Activated B cell treated with CpG ODN at 0.5 μM for 24 hours (primary cell): ENCODE measurements at regions of chr9 and their contacts with region 1.

Region 1: GRCh38 chr9:33202552-33203201 is 35.5 kb upstream of the B4GALT1 start:
- DNase-seq: peak; percentile 67
- ATAC-seq: peak; percentile 98
- H3K4me3 Mint-ChIP-seq: peak overlapping the region; percentile 78
- H3K27ac Mint-ChIP-seq: peak overlapping the region; percentile 83
- H3K4me1 Mint-ChIP-seq: peaks cover 24% of the 10 kb centered on the region
- H3K27me3 Mint-ChIP-seq: peaks cover 1% of the 10 kb centered on the region
- CTCF ChIP-seq: no peak

Region 2: DNA sequence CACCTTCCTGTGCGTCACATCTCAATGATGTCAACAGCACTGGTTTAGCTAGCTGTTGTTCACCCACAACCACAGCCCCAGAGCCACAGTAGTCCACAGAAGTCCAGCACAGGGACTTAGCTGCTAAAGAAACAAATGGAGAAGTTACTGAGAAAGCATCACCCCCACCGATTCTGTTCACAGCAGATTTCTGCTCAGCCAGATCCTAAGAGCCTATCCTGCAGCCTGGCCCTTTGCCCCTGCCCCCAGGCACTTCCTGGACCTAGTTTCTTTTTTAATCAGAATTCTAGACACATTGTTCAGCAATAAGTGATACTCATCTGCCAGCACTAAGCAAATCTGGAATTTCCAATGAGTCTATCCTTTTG is 42.9 kb before region 1 on chr9:
- CTCF ChIA-PET with region 1: no interaction called
- POLR2A ChIA-PET with region 1: interaction called, 11 read pairs
- intact Hi-C with region 1: no loop called
- DNase-seq: no peak
- ATAC-seq: peak; percentile 47
- H3K4me3 Mint-ChIP-seq: peak overlapping the region; percentile 97
- H3K27ac Mint-ChIP-seq: peak overlapping the region; percentile 95
- H3K4me1 Mint-ChIP-seq: peaks cover 99% of the 10 kb centered on the region
- H3K27me3 Mint-ChIP-seq: no peaks in the 10 kb centered on the region
- CTCF ChIP-seq: no peak

Region 3: DNA sequence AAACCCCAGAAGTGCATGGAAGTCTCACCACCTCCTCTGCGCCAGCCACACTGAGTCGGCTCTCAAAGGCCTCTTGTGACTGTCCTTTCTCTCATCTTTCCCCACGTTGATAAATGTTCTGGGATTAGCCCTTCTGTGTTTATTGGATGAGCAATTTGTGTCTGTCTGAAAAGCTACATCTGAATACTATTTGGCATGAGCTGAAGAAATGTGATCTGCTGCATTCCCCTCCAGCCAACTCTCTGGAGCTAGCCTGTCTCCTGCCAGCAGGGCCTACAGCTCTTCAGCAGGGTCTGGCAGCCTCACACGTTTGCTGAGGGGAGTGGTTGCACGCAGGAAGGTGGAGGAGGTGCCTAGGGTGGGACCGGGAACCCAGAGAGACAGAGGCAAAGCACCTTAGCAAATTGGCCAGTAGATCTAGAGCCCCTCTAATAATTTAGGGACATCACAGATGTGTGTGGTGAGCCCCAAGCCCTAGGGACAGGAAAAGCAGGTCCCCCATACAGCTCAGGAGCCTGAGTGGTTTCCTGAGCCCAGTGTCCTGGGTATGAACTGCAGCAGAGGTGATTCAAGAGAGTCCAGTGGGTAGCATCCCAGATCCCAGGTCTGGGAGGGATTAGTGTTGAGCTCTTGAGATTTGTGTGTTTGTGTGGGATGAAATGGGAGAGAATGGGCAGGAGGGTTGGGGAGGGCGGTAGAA is 15.0 kb before region 1 on chr9:
- CTCF ChIA-PET with region 1: interaction called, 4 read pairs
- POLR2A ChIA-PET with region 1: no interaction called
- intact Hi-C with region 1: loop called (anchors 2 kb)
- DNase-seq: no peak
- ATAC-seq: no peak
- H3K4me3 Mint-ChIP-seq: no peak overlapping the region
- H3K27ac Mint-ChIP-seq: no peak overlapping the region
- H3K4me1 Mint-ChIP-seq: peaks cover 10% of the 10 kb centered on the region
- H3K27me3 Mint-ChIP-seq: peaks cover 3% of the 10 kb centered on the region
- CTCF ChIP-seq: no peak

Region 4: DNA sequence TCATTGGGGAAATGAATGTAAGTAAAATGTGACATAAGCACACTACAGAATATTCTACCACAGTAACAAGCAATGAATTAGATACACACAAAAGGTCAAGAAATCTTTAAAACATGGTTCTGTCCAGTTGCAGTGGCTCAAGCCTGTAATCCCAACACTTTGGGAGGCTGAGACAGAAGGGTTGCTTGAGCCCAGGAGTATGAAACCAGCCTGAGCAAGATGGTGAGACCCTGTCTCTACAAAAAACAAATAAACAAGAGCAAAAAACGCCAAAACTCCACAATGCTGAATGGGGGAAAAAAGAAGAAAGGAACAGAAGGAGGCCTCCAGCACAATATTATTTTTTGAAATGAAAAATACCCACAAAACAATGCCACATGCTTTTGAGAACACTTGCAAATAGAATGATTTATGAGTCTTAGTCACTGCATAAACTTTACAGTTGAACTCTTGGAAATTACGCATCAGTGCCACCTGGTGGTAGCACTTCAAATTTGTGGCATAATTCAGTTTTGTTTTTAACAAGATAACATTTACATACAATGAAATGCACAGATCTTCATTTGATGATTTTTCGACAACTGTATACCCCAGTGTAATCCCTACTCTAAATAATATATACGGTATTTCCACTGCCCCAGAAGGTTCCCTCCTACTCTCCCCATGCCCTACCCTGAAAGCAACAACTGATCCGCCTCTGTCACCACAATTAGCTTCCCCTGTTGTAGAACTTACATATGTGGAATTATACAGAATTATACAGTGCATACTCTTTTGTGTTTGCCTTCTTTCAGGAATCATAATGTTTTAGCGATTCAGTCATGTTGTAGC is 22.9 kb after region 1 on chr9:
- CTCF ChIA-PET with region 1: interaction called, 25 read pairs
- POLR2A ChIA-PET with region 1: interaction called, 4 read pairs
- intact Hi-C with region 1: loop called (anchors 2 kb)
- DNase-seq: no peak
- ATAC-seq: peak; percentile 33
- H3K4me3 Mint-ChIP-seq: no peak overlapping the region
- H3K27ac Mint-ChIP-seq: peak overlapping the region; percentile 4
- H3K4me1 Mint-ChIP-seq: peaks cover 51% of the 10 kb centered on the region
- H3K27me3 Mint-ChIP-seq: no peaks in the 10 kb centered on the region
- CTCF ChIP-seq: no peak

Region 5: GRCh38 chr9:34025062-34025461 is 822.4 kb after region 1 on chr9:
- CTCF ChIA-PET with region 1: no interaction called
- POLR2A ChIA-PET with region 1: no interaction called
- intact Hi-C with region 1: no loop called
- DNase-seq: no peak
- ATAC-seq: no peak
- H3K4me3 Mint-ChIP-seq: no peak overlapping the region
- H3K27ac Mint-ChIP-seq: no peak overlapping the region
- H3K4me1 Mint-ChIP-seq: no peaks in the 10 kb centered on the region
- H3K27me3 Mint-ChIP-seq: no peaks in the 10 kb centered on the region
- CTCF ChIP-seq: no peak